Heart right ventricle (tissue), 16 donors: ENCODE measurements at regions of chr16 and their contacts with region 1.

Region 1: GRCh38 chr16:30984669-30985400 is at the start of gene HSD3B7:
- DNase-seq: peak; percentile 91 to 92
- ATAC-seq: peak; percentile 84 to 94 (median 93)
- H3K4me3 ChIP-seq: peak within 1 kb of the TSS; percentile 12 to 64 (median 58)
- H3K27ac ChIP-seq: peak within 1 kb of the TSS in 8 of 10 donors; percentile 37 to 82 (median 72)
- H3K4me1 ChIP-seq: peaks cover 8 to 20% (median 14%) of the 10 kb centered on the region in 9 donors
- H3K27me3 ChIP-seq: no peaks in the 10 kb centered on the region
- CTCF ChIP-seq: peak; percentile 94 to 98 (median 97)
- total RNA-seq, gene HSD3B7: 3.3 to 13.3 (median 5.3) TPM

Region 2: DNA sequence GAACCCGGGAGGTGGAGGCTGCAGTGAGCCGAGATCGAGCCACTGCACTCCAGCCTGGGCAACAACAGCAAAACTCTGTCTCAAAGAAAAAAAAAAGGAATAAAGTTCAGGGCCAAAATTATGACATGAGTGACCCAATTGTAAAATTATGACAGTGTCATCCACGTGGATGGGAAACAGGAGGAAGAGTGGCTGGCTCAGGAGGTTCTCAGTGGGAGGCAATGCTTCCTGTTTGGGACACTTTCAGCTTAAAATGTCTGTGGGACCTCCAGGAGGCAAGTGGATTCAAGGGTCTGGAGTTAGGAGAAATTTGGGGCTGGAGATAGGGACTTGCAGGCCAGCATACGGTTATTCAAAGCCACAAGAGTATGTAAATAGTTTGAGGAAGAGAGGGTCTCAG is 40.5 kb after region 1 on chr16:
- intact Hi-C with region 1: loop called in 6 of 10 experiments (anchors 5 to 10 kb)
- DNase-seq: no peak
- ATAC-seq: no peak
- H3K4me3 ChIP-seq: no peak overlapping the region
- H3K27ac ChIP-seq: peak overlapping the region in 1 of 10 donors; percentile 69
- H3K4me1 ChIP-seq: peaks cover 0 to 12% (median 0%) of the 10 kb centered on the region in 9 donors
- H3K27me3 ChIP-seq: no peaks in the 10 kb centered on the region
- CTCF ChIP-seq: no peak

Region 3: DNA sequence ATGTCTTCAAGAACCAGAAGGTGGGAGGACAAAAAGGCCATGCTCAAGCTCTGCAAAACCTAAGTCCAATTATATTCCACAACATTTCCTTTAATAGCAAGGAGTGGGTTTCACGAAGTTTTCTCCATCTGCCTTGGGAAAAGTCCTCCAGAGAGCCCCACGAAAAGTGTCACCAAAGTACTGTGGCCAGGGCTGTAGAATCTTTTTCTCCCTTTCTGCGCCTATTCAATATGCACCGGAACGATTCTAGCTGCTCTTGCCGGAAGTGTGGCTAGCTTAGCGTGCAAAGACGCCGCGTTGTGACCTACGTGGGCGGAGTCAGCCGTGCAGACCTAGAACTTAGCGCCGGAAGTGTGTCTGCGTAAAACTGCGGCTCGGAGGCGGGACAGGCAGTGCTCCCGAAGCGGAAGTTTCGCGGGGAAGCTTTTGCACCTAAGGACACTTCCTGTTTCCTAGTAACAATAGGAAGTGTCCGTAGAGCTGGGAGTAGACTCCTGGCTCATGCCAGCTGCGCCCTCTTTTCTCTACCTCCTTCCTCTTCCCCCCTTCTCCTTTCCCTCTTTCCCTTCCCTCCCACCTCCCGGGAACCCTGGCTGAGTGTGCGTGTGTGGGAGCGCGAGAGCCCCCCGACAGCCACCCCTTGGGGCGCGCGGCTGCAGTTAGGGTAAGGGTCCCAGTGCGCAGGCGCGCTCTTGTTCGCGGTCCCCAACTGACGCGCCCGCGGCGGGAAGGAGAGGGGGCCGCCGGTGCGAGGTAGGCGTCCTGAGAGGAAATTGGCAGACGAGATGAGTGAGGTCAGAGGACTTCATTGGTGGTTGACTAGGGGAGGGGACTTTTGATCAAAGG is 89.4 kb after region 1 on chr16 and contains the starts of genes ZNF646 and ZNF668:
- intact Hi-C with region 1: loop called in 3 of 10 experiments (anchors 5 to 10 kb)
- DNase-seq: peak; percentile 97 to 99
- ATAC-seq: peak; percentile 93 to 99 (median 96)
- H3K4me3 ChIP-seq: peak within 1 kb of the TSS; percentile 74 to 99 (median 84)
- H3K27ac ChIP-seq: peak within 1 kb of the TSS; percentile 87 to 99 (median 96)
- H3K4me1 ChIP-seq: peaks cover 2 to 33% (median 27%) of the 10 kb centered on the region in 9 donors
- H3K27me3 ChIP-seq: no peaks in the 10 kb centered on the region
- CTCF ChIP-seq: no peak
- total RNA-seq, gene ZNF646: 7.5 to 12.0 (median 8.7) TPM
- total RNA-seq, gene ZNF668: 3.6 to 8.2 (median 4.5) TPM

Region 4: DNA sequence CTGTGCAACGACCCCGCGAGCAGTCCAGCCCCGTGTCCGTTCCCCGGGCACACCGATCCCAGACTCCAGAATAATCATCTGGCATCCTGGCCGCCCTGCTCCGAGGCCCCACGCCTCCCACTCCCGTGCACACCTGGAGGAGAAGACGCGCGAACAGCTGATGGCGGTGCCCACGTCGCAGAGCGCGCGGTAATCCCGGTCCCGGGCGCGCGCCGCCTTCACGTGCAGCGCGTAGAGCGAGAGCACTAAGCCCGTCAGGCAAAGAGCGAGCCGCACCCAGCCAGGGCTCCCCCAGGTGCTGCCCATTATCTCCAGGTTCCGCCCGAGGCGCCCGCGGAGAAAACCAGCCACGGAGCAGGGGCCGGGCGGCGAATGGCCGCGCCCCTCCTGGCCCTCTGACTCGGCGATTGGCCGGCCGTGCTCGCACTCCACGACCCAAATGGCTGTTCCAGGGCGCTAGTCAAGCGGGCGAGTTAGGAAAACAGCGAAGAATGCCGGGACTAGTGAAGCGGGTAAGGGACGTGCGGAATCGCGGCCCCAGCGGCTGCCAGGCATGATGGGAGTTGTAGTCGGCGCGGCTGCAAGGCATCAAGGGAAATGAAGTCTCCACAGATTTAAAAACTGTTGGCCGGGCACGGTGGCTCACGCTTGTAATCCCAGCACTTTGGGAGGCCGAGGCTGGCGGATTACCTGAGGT is 109.7 kb after region 1 on chr16 and contains the start of gene VKORC1:
- intact Hi-C with region 1: loop called in 5 of 10 experiments (anchors 1 to 10 kb)
- DNase-seq: peak; percentile 93 to 96
- ATAC-seq: peak; percentile 95 to 98 (median 96)
- H3K4me3 ChIP-seq: peak within 1 kb of the TSS; percentile 76 to 98 (median 88)
- H3K27ac ChIP-seq: peak within 1 kb of the TSS; percentile 51 to 93 (median 86)
- H3K4me1 ChIP-seq: peaks cover 0 to 30% (median 20%) of the 10 kb centered on the region in 9 donors
- H3K27me3 ChIP-seq: no peaks in the 10 kb centered on the region
- CTCF ChIP-seq: peak in 1 of 9 donors; percentile 12
- total RNA-seq, gene VKORC1: 27.0 to 68.1 (median 31.8) TPM

Region 5: GRCh38 chr16:31333686-31334649 is 349.1 kb after region 1 on chr16:
- intact Hi-C with region 1: loop called in 1 of 10 experiments (anchors 10 kb)
- DNase-seq: no peak
- ATAC-seq: peak in 5 of 8 donors; percentile 43 to 58 (median 48)
- H3K4me3 ChIP-seq: no peak overlapping the region
- H3K27ac ChIP-seq: no peak overlapping the region
- H3K4me1 ChIP-seq: peaks cover 0 to 5% (median 0%) of the 10 kb centered on the region in 9 donors
- H3K27me3 ChIP-seq: peaks cover 6 to 81% (median 64%) of the 10 kb centered on the region in 7 donors
- CTCF ChIP-seq: peak in 7 of 9 donors; percentile 12 to 44 (median 25)

Region 6: GRCh38 chr16:31868691-31869167 is 883.9 kb after region 1 on chr16:
- intact Hi-C with region 1: loop called in 7 of 10 experiments (anchors 2 to 10 kb)
- DNase-seq: peak; percentile 63 to 82
- ATAC-seq: peak; percentile 38 to 78 (median 66)
- H3K4me3 ChIP-seq: peak overlapping the region in 2 of 10 donors; percentile 20 to 22
- H3K27ac ChIP-seq: peak overlapping the region in 4 of 10 donors; percentile 0 to 93 (median 36)
- H3K4me1 ChIP-seq: peaks cover 0 to 36% (median 8%) of the 10 kb centered on the region in 9 donors
- H3K27me3 ChIP-seq: peaks cover 0 to 4% (median 0%) of the 10 kb centered on the region in 7 donors
- CTCF ChIP-seq: peak; percentile 74 to 91 (median 83)